Naive thymus-derived CD4-positive, alpha-beta T cell (primary cell): ENCODE measurements at regions of chr2 and their contacts with region 1.

Region 1: GRCh38 chr2:161160226-161161069 is at the start of gene TANK:
- DNase-seq: peak; percentile 72 to 90 (median 88)
- ATAC-seq: peak; percentile 96
- H3K4me3 ChIP-seq: peak within 1 kb of the TSS; percentile 75
- H3K4me3 Mint-ChIP-seq: peak within 1 kb of the TSS; percentile 95 to 100 (median 98)
- H3K27ac ChIP-seq: peak within 1 kb of the TSS; percentile 84
- H3K27ac Mint-ChIP-seq: peak within 1 kb of the TSS; percentile 95 to 99 (median 98)
- H3K4me1 ChIP-seq: peaks cover 19 to 39% of the 10 kb centered on the region in 2 donors
- H3K4me1 Mint-ChIP-seq: peaks cover 21 to 64% (median 60%) of the 10 kb centered on the region in 7 donors
- H3K27me3 ChIP-seq: no peaks in the 10 kb centered on the region
- H3K27me3 Mint-ChIP-seq: no peaks in the 10 kb centered on the region
- total RNA-seq, gene TANK: 57.4 to 142 (median 62.4) TPM

Region 2: GRCh38 chr2:159286709-159287441 is 1873.6 kb before region 1 on chr2:
- CTCF ChIA-PET with region 1: no interaction called
- POLR2A ChIA-PET with region 1: no interaction called
- intact Hi-C with region 1: loop called in 1 of 2 experiments (anchors 1 kb)
- DNase-seq: peak; percentile 89 to 97 (median 94)
- ATAC-seq: peak; percentile 99
- H3K4me3 ChIP-seq: peak overlapping the region; percentile 72
- H3K4me3 Mint-ChIP-seq: peak overlapping the region; percentile 80 to 92 (median 89)
- H3K27ac ChIP-seq: peak overlapping the region; percentile 77
- H3K27ac Mint-ChIP-seq: peak overlapping the region; percentile 64 to 97 (median 85)
- H3K4me1 ChIP-seq: peaks cover 8 to 13% of the 10 kb centered on the region in 2 donors
- H3K4me1 Mint-ChIP-seq: peaks cover 15 to 36% (median 31%) of the 10 kb centered on the region in 7 donors
- H3K27me3 ChIP-seq: no peaks in the 10 kb centered on the region
- H3K27me3 Mint-ChIP-seq: no peaks in the 10 kb centered on the region

Region 3: DNA sequence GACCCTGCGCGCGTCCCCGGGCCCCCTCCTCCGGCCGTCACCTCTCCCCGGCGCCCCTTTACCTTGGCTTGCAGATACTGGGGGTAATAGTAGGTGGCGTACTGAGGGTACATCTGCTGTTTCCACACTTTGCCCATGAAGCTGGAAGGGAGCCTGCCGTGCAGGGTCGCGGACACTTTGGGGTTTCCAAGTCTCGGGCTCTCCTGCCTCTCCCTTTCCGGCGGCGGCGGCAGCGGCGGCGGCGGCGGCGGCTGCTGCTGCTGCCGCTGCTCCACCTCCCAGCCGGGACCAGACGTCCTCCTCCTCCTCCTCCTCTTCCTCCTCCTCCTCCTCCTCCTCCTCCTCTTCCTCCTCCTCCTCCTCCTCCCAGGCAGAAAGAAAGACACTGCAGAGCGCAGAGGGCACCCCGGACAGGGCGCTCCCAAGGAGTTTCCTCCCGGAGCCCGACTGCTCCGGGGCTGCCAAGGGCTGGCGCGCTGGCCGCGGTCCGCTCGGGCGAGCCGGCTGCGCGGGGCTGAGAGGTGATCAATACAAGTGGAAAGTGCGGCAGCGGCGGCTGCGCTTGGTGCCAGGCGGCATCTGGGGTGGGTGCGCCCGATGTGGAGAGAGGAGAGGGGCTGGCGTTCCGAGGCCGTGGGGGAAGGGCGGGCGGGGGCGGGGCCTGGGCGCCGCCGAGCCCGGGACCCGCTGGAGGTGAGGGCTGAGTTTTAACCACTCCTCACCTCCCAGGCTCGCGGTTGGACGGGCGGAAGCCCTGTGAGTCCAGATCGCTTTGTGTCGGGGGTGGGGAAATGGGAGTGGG is 667.0 kb before region 1 on chr2 and contains the start of gene RBMS1:
- CTCF ChIA-PET with region 1: no interaction called
- POLR2A ChIA-PET with region 1: no interaction called
- intact Hi-C with region 1: loop called in 1 of 2 experiments (anchors 10 kb)
- DNase-seq: peak; percentile 36 to 63 (median 57)
- ATAC-seq: peak; percentile 55
- H3K4me3 ChIP-seq: peak within 1 kb of the TSS; percentile 64
- H3K4me3 Mint-ChIP-seq: peak within 1 kb of the TSS; percentile 87 to 98 (median 96)
- H3K27ac ChIP-seq: peak within 1 kb of the TSS; percentile 96
- H3K27ac Mint-ChIP-seq: peak within 1 kb of the TSS; percentile 91 to 98 (median 97)
- H3K4me1 ChIP-seq: peaks cover 3 to 10% of the 10 kb centered on the region in 2 donors
- H3K4me1 Mint-ChIP-seq: peaks cover 17 to 56% (median 47%) of the 10 kb centered on the region in 7 donors
- H3K27me3 ChIP-seq: no peaks in the 10 kb centered on the region
- H3K27me3 Mint-ChIP-seq: peaks cover 0 to 12% (median 0%) of the 10 kb centered on the region in 5 donors
- total RNA-seq, gene RBMS1: 74.4 to 123 (median 101) TPM

Region 4: DNA sequence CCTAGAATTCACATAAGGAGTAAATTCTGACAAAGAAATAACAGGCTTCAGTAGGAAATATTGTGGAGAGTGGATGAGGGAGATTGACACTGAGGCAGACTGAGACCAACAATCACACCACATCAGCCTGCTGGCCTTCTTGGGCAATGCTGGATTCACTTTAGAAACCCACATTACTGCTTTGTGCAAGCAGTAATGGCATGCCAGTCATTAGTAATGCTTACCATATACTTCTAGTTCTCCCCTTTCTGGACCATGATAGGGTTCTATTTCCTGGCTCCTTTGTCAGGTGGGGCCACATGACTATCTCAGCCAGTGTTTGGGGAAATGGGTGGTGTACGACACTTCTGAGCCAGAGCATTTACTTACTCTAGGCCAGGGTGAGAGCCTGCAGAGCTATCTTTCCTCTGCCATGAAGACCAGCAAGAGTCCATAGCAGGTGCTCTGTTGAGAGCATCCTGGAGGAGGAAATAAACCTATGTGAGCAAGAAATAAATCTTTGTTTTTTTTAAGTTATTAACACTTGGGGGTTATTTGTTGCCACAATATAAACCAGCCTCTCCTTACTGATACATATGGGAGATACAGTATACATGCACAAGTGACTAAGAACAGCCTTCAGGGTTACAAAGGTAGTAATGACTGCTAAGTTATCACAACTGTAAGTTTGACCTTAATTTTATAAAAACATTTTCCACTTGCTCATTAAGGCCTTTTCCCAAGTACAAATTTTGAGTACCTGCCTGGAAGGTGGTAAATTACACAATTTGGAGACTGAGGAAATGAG is 89.6 kb before region 1 on chr2:
- CTCF ChIA-PET with region 1: no interaction called
- POLR2A ChIA-PET with region 1: no interaction called
- intact Hi-C with region 1: no loop called
- DNase-seq: no peak
- ATAC-seq: no peak
- H3K4me3 ChIP-seq: no peak overlapping the region
- H3K4me3 Mint-ChIP-seq: no peak overlapping the region
- H3K27ac ChIP-seq: no peak overlapping the region
- H3K27ac Mint-ChIP-seq: no peak overlapping the region
- H3K4me1 ChIP-seq: no peaks in the 10 kb centered on the region
- H3K4me1 Mint-ChIP-seq: peaks cover 0 to 32% (median 0%) of the 10 kb centered on the region in 7 donors
- H3K27me3 ChIP-seq: no peaks in the 10 kb centered on the region
- H3K27me3 Mint-ChIP-seq: peaks cover 0 to 4% (median 0%) of the 10 kb centered on the region in 5 donors

Region 5: GRCh38 chr2:161090411-161090810 is 70.0 kb before region 1 on chr2:
- CTCF ChIA-PET with region 1: no interaction called
- POLR2A ChIA-PET with region 1: no interaction called
- intact Hi-C with region 1: loop called in 1 of 2 experiments (anchors 2 kb)
- DNase-seq: peak in 6 of 9 donors; percentile 26 to 47 (median 39)
- ATAC-seq: peak; percentile 76
- H3K4me3 ChIP-seq: peak overlapping the region; percentile 20
- H3K4me3 Mint-ChIP-seq: peak overlapping the region in 9 of 10 donors; percentile 49 to 81 (median 71)
- H3K27ac ChIP-seq: no peak overlapping the region
- H3K27ac Mint-ChIP-seq: peak overlapping the region in 7 of 9 donors; percentile 11 to 91 (median 74)
- H3K4me1 ChIP-seq: peaks cover 5 to 11% of the 10 kb centered on the region in 2 donors
- H3K4me1 Mint-ChIP-seq: peaks cover 13 to 52% (median 19%) of the 10 kb centered on the region in 7 donors
- H3K27me3 ChIP-seq: no peaks in the 10 kb centered on the region
- H3K27me3 Mint-ChIP-seq: no peaks in the 10 kb centered on the region

Region 6: GRCh38 chr2:161104054-161104553 is 56.3 kb before region 1 on chr2:
- CTCF ChIA-PET with region 1: no interaction called
- POLR2A ChIA-PET with region 1: no interaction called
- intact Hi-C with region 1: no loop called
- DNase-seq: no peak
- ATAC-seq: no peak
- H3K4me3 ChIP-seq: no peak overlapping the region
- H3K4me3 Mint-ChIP-seq: peak overlapping the region in 1 of 10 donors; percentile 73
- H3K27ac ChIP-seq: no peak overlapping the region
- H3K27ac Mint-ChIP-seq: peak overlapping the region in 1 of 9 donors; percentile 70
- H3K4me1 ChIP-seq: no peaks in the 10 kb centered on the region
- H3K4me1 Mint-ChIP-seq: peaks cover 0 to 29% (median 0%) of the 10 kb centered on the region in 7 donors
- H3K27me3 ChIP-seq: no peaks in the 10 kb centered on the region
- H3K27me3 Mint-ChIP-seq: no peaks in the 10 kb centered on the region

Region 7: GRCh38 chr2:161243905-161244304 is 83.5 kb after region 1 on chr2:
- CTCF ChIA-PET with region 1: no interaction called
- POLR2A ChIA-PET with region 1: interaction called, 3 read pairs
- intact Hi-C with region 1: loop called (anchors 1 kb)
- DNase-seq: peak in 3 of 9 donors; percentile 18 to 22 (median 18)
- ATAC-seq: no peak
- H3K4me3 ChIP-seq: peak overlapping the region; percentile 61
- H3K4me3 Mint-ChIP-seq: peak overlapping the region; percentile 82 to 98 (median 92)
- H3K27ac ChIP-seq: peak overlapping the region; percentile 83
- H3K27ac Mint-ChIP-seq: peak overlapping the region; percentile 88 to 96 (median 94)
- H3K4me1 ChIP-seq: peaks cover 15 to 25% of the 10 kb centered on the region in 2 donors
- H3K4me1 Mint-ChIP-seq: peaks cover 15 to 73% (median 65%) of the 10 kb centered on the region in 7 donors
- H3K27me3 ChIP-seq: no peaks in the 10 kb centered on the region
- H3K27me3 Mint-ChIP-seq: no peaks in the 10 kb centered on the region

Region 8: DNA sequence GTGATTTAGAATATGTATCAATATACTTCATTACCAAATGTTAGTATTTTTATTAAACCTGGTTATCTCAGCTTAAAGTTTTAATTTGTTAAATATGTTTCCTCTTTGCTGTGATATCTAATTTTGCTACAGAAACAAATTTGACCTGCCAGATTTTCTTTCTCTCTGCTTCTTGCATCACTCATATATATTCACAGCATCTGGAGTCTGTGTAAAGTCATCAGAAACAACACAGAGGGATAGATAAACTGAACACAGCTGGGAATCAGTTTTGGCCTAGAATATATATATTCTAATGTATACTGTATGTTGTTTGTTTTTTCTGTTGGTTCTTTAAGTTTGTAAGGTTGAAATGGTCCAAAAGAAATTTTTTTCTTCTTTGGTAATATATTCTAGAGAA is 156.3 kb after region 1 on chr2:
- CTCF ChIA-PET with region 1: no interaction called
- POLR2A ChIA-PET with region 1: no interaction called
- intact Hi-C with region 1: no loop called
- DNase-seq: no peak
- ATAC-seq: no peak
- H3K4me3 ChIP-seq: no peak overlapping the region
- H3K4me3 Mint-ChIP-seq: no peak overlapping the region
- H3K27ac ChIP-seq: no peak overlapping the region
- H3K27ac Mint-ChIP-seq: peak overlapping the region in 1 of 9 donors; percentile 11
- H3K4me1 ChIP-seq: no peaks in the 10 kb centered on the region
- H3K4me1 Mint-ChIP-seq: peaks cover 5 to 56% (median 40%) of the 10 kb centered on the region in 7 donors
- H3K27me3 ChIP-seq: no peaks in the 10 kb centered on the region
- H3K27me3 Mint-ChIP-seq: no peaks in the 10 kb centered on the region

Region 9: DNA sequence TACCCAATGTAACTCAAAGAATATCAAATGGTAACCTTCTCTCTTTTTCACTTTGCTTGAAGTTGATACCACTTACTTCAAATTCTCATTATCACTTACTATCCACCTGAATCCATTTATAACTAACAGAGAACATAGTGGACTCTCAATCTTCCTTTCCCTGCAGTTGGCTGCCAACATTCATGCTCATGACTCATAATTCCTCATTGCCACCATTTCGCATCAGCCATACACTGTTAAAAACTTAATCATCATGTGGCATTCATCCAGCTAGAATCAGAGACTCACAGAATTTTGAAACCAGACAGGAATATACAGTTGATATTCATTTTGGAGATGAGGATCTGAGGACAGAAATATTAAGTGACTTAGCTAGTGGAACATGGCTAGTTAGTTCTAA is 520.6 kb after region 1 on chr2:
- CTCF ChIA-PET with region 1: no interaction called
- POLR2A ChIA-PET with region 1: no interaction called
- intact Hi-C with region 1: no loop called
- DNase-seq: no peak
- ATAC-seq: no peak
- H3K4me3 ChIP-seq: no peak overlapping the region
- H3K4me3 Mint-ChIP-seq: no peak overlapping the region
- H3K27ac ChIP-seq: no peak overlapping the region
- H3K27ac Mint-ChIP-seq: no peak overlapping the region
- H3K4me1 ChIP-seq: no peaks in the 10 kb centered on the region
- H3K4me1 Mint-ChIP-seq: peaks cover 0 to 3% (median 0%) of the 10 kb centered on the region in 7 donors
- H3K27me3 ChIP-seq: no peaks in the 10 kb centered on the region
- H3K27me3 Mint-ChIP-seq: peaks cover 10 to 25% (median 12%) of the 10 kb centered on the region in 5 donors

Region 10: GRCh38 chr2:162013514-162014475 is 853.3 kb after region 1 on chr2:
- CTCF ChIA-PET with region 1: no interaction called
- POLR2A ChIA-PET with region 1: no interaction called
- intact Hi-C with region 1: loop called in 1 of 2 experiments (anchors 1 kb)
- DNase-seq: peak in 7 of 9 donors; percentile 30 to 71 (median 55)
- ATAC-seq: peak; percentile 36
- H3K4me3 ChIP-seq: peak overlapping the region; percentile 11
- H3K4me3 Mint-ChIP-seq: peak overlapping the region; percentile 52 to 86 (median 70)
- H3K27ac ChIP-seq: peak overlapping the region; percentile 95
- H3K27ac Mint-ChIP-seq: peak overlapping the region; percentile 94 to 99 (median 98)
- H3K4me1 ChIP-seq: peaks cover 47 to 72% of the 10 kb centered on the region in 2 donors
- H3K4me1 Mint-ChIP-seq: peaks cover 41 to 86% (median 81%) of the 10 kb centered on the region in 7 donors
- H3K27me3 ChIP-seq: no peaks in the 10 kb centered on the region
- H3K27me3 Mint-ChIP-seq: no peaks in the 10 kb centered on the region